Activated T-helper 2 cell treated with anti-CD3 and anti-CD28 coated beads, Interferon-gamma antibody, Interleukin-2, Interleukin-4, amounts not matched to agents 10 μg/mL and 5 μg/mL and 100 μg/mL, durations not matched to agents 14 hours and 24 hours and 36 hours (primary cell): ENCODE measurements at regions of chr14 and their contacts with region 1.

Region 1: GRCh38 chr14:91418387-91419043 is 895 bp upstream of the CCDC88C start:
- DNase-seq: peak; percentile 75
- H3K4me3 Mint-ChIP-seq: peak overlapping the region; percentile 67
- H3K27ac Mint-ChIP-seq: peak overlapping the region; percentile 85
- H3K4me1 Mint-ChIP-seq: peaks cover 36% of the 10 kb centered on the region
- H3K27me3 Mint-ChIP-seq: no peaks in the 10 kb centered on the region

Region 2: DNA sequence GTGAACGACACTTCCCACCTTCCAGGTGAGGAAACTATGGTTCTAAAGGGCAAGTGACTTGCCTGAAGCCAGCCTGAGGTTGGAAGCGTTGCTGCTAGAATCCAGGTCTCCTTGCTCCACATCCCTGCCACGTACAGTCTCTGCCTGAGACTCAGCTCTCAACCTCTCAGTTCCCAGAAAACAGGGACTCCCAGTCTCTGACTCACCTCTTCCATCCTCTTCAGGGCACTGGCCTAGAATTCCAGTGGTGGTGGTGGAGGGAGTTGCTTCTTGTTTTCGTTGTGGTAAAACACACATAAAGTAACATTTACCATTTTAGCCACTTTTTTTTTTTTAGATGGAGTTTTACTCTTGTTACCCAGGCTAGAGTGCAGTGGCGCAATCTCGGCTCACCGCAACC is 181.3 kb before region 1 on chr14:
- intact Hi-C with region 1: no loop called
- DNase-seq: no peak
- H3K4me3 Mint-ChIP-seq: no peak overlapping the region
- H3K27ac Mint-ChIP-seq: peak overlapping the region; percentile 24
- H3K4me1 Mint-ChIP-seq: peaks cover 50% of the 10 kb centered on the region
- H3K27me3 Mint-ChIP-seq: no peaks in the 10 kb centered on the region

Region 3: GRCh38 chr14:91249841-91250616 is 168.5 kb before region 1 on chr14:
- intact Hi-C with region 1: loop called (anchors 5 kb)
- DNase-seq: peak; percentile 55
- H3K4me3 Mint-ChIP-seq: peak overlapping the region; percentile 23
- H3K27ac Mint-ChIP-seq: peak overlapping the region; percentile 92
- H3K4me1 Mint-ChIP-seq: peaks cover 68% of the 10 kb centered on the region
- H3K27me3 Mint-ChIP-seq: no peaks in the 10 kb centered on the region

Region 4: DNA sequence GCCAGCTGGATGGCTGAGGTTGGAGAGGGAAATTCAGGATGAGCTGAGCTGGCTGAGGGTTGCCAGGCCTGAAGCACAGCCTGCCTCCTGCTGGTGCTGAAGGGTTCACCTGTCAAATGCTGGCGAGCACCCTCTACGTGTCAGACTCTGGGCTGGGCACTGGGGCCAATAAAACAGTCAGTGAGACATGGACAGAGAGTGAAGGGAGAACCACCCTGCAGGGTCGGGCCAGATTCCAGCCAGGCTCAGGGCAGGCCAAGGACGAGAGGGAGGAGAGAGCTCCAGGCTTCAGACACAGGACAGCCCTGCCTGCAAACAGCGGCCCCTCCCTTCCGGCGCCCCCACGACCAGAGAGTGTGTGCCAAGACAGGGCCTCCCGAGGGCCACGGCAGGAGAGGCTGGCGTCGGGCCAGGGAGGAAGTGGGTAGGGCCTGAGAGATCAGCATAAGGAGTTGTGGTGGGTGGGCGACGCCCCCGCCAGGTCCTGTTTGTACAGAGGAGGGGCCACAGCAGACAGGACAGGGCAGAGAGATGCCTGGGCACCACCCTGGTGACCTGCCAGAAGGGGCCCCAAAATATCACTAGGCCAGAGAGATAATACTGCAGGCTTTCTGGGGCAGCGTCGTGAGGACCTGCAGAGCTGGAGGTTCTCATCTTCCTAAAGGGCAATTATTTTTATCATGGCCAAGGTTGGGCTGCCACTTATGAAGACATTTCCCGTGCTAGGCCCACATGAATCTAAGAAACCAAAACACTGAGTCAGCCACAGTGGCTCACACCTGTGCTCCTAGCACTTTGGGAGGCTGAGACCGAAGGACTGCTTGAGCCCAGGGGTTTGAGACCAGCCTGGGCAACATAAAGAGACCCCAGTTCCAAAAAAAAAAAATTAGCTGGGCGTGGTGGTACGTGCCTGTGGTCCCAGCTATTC is 100.9 kb before region 1 on chr14:
- intact Hi-C with region 1: loop called (anchors 1 kb)
- DNase-seq: peak; percentile 69
- H3K4me3 Mint-ChIP-seq: peak overlapping the region; percentile 54
- H3K27ac Mint-ChIP-seq: peak overlapping the region; percentile 98
- H3K4me1 Mint-ChIP-seq: peaks cover 55% of the 10 kb centered on the region
- H3K27me3 Mint-ChIP-seq: no peaks in the 10 kb centered on the region

Region 5: DNA sequence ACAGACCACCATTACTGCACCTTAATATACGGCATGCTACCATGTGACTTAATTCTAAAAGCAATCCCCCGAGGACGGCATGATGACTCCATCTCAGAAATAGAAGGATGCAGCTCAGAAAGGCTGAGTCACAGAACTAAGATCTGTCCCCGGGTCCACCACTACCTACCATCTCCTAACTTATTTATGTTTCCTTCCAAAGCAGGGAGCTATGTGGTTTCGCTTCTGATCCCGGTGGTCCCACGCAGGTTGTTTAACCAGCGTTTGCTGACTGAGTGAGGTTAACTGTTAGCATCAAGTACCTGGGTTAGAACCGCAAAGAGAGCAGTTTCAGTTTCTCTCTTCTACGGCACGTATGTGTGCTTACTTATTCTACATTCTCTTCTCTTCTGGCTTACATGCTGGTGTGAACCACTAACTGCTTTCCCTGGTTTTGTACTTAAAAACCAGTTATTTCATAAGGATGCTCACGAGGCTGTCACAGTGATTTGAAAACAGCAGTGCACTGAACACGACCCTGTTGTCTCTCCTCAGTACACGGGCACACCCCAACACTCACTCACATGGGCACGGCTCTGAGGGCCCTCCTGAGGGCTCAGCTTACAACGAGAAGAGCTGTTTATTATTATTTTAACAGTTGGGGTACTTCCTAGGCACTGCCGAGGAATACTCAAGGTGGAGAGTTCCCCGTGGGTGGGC is 67.6 kb before region 1 on chr14:
- intact Hi-C with region 1: loop called (anchors 1 kb)
- DNase-seq: peak; percentile 75
- H3K4me3 Mint-ChIP-seq: peak overlapping the region; percentile 72
- H3K27ac Mint-ChIP-seq: peak overlapping the region; percentile 87
- H3K4me1 Mint-ChIP-seq: peaks cover 80% of the 10 kb centered on the region
- H3K27me3 Mint-ChIP-seq: no peaks in the 10 kb centered on the region

Region 6: DNA sequence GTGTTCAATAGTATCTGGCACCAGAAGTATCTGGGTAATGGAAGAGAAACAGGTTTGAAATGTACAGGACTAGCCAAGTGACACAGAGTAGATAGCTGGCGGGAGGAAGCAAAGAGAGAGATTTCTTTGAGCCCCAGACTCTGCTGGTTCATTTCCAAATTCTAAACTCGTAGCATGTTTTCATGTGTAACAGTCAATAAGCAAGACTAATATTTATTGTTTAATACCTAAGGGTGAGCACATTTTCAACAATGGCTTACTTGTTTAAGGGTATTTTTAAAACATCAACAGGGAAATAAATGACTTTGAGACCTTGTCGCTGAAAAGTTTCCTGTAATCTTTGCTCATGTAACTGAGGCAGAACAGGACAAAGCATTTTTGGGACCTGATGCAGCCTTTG is 10.9 kb after region 1 on chr14:
- intact Hi-C with region 1: no loop called
- DNase-seq: no peak
- H3K4me3 Mint-ChIP-seq: no peak overlapping the region
- H3K27ac Mint-ChIP-seq: no peak overlapping the region
- H3K4me1 Mint-ChIP-seq: peaks cover 9% of the 10 kb centered on the region
- H3K27me3 Mint-ChIP-seq: no peaks in the 10 kb centered on the region

Region 7: GRCh38 chr14:91510174-91511042 is 91.9 kb after region 1 on chr14 and contains the start of gene PPP4R3A:
- intact Hi-C with region 1: loop called (anchors 2 kb)
- DNase-seq: peak; percentile 94
- H3K4me3 Mint-ChIP-seq: peak within 1 kb of the TSS; percentile 97
- H3K27ac Mint-ChIP-seq: peak within 1 kb of the TSS; percentile 99
- H3K4me1 Mint-ChIP-seq: peaks cover 21% of the 10 kb centered on the region
- H3K27me3 Mint-ChIP-seq: peaks cover 2% of the 10 kb centered on the region
- total RNA-seq, gene PPP4R3A: 104 and 121 TPM in 2 replicates